Natural killer cell (primary cell): ENCODE measurements at regions of chr5 and their contacts with region 1.

Region 1: DNA sequence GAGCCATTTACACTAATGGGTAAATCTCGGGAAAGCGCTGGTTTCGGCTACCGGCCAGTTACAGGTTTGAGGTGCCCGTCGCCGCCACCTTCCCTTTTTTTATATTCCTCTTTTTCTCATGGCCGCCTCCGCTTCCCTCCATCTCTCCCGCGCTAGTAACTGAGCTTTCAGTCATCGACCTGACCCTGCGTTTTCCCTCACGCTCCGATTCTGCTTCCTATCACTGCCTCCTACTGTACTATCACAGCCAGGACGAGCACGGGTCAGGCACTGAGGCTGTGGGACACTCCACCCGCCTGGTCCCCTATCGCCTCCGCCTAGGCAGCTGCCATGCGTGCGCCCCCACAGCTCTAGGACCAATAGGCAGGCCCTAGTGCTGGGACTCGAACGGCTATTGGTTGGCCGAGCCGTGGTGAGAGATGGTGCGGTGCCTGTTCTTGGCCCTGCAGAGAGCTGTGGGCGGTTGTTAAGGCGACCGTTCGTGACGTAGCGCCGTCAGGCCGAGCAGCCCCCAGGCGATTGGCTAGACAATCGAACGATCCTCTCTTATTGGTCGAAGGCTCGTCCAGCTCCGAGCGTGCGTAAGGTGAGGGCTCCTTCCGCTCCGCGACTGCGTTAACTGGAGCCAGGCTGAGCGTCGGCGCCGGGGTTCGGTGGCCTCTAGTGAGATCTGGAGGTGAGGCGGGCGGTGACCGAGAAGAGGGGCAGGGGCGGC is at the start of gene HMGCR:
- DNase-seq: peak; percentile 95 to 99
- ATAC-seq: peak; percentile 90 to 98 (median 92)
- H3K4me3 ChIP-seq: peak within 1 kb of the TSS; percentile 77
- H3K4me3 Mint-ChIP-seq: no peak within 1 kb of the TSS
- H3K27ac ChIP-seq: peak within 1 kb of the TSS; percentile 82
- H3K27ac Mint-ChIP-seq: no peak within 1 kb of the TSS
- H3K4me1 ChIP-seq: peaks cover 10% of the 10 kb centered on the region
- H3K4me1 Mint-ChIP-seq: peaks cover 19 to 24% of the 10 kb centered on the region in 2 donors
- H3K27me3 ChIP-seq: no peaks in the 10 kb centered on the region
- H3K27me3 Mint-ChIP-seq: no peaks in the 10 kb centered on the region
- CTCF ChIP-seq: no peak
- total RNA-seq, gene HMGCR: 44.2 to 89.5 (median 62.6) TPM

Region 2: GRCh38 chr5:75236322-75237316 is 100.2 kb before region 1 on chr5 and contains the start of gene ANKRD31:
- intact Hi-C with region 1: loop called (anchors 1 kb)
- DNase-seq: peak; percentile 92 to 96
- ATAC-seq: peak; percentile 98 to 100 (median 100)
- H3K4me3 ChIP-seq: peak within 1 kb of the TSS; percentile 64
- H3K4me3 Mint-ChIP-seq: peak within 1 kb of the TSS; percentile 89
- H3K27ac ChIP-seq: peak within 1 kb of the TSS; percentile 69
- H3K27ac Mint-ChIP-seq: peak within 1 kb of the TSS; percentile 79 to 90
- H3K4me1 ChIP-seq: peaks cover 9% of the 10 kb centered on the region
- H3K4me1 Mint-ChIP-seq: peaks cover 0 to 5% of the 10 kb centered on the region in 2 donors
- H3K27me3 ChIP-seq: peaks cover 4% of the 10 kb centered on the region
- H3K27me3 Mint-ChIP-seq: peaks cover 0 to 4% of the 10 kb centered on the region in 2 donors
- CTCF ChIP-seq: peak; percentile 94
- total RNA-seq, gene ANKRD31: 0.09 to 0.15 (median 0.12) TPM

Region 3: DNA sequence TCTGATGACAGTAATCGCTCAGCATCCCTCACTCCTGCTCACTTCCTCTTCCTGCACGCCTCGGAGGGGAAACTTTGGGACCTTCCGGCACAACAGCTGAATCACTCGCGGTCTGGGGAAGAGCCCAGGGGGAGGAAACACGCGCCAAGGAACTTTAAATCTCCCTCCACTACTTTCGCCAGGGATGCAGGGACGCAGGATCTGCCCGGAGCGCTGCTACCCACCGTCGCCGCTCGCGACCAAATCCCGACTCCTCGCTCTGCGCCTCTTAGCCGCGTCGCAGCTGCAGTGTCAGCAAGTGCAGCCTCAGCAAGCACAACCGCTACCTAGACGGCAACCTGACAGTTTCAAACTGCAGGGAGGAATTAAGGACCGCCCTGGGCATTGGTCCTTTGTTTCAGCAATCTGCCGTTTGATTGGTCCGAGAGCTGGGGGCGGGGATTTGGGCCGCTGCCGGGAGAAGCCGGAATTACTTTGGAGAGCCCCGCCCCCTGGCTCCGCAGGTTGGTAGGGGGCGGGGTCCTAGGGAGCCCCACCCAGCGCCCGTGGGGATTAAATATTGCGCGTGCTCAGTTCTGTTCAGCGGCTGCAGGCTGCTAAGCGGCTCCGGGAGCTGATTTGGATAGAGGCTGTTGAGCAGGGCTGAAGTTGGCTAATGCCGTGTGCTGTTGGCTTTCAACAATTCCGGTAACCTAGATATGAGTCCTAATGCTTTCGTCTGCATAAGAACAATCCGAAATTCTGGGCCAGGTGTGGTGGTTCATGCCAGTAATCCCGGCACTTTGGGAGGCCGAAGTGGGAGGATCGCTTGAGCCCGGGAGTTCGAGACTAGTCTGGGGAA is 380.5 kb after region 1 on chr5 and contains the start of gene POC5:
- intact Hi-C with region 1: loop called (anchors 2 kb)
- DNase-seq: peak; percentile 97 to 98
- ATAC-seq: peak; percentile 94 to 97 (median 95)
- H3K4me3 ChIP-seq: peak within 1 kb of the TSS; percentile 75
- H3K4me3 Mint-ChIP-seq: peak within 1 kb of the TSS; percentile 97
- H3K27ac ChIP-seq: peak within 1 kb of the TSS; percentile 76
- H3K27ac Mint-ChIP-seq: peak within 1 kb of the TSS; percentile 92 to 97
- H3K4me1 ChIP-seq: peaks cover 11% of the 10 kb centered on the region
- H3K4me1 Mint-ChIP-seq: peaks cover 33 to 37% of the 10 kb centered on the region in 2 donors
- H3K27me3 ChIP-seq: no peaks in the 10 kb centered on the region
- H3K27me3 Mint-ChIP-seq: peaks cover 0 to 6% of the 10 kb centered on the region in 2 donors
- CTCF ChIP-seq: no peak
- total RNA-seq, gene POC5: 12.4 to 16.6 (median 12.5) TPM

Region 4: DNA sequence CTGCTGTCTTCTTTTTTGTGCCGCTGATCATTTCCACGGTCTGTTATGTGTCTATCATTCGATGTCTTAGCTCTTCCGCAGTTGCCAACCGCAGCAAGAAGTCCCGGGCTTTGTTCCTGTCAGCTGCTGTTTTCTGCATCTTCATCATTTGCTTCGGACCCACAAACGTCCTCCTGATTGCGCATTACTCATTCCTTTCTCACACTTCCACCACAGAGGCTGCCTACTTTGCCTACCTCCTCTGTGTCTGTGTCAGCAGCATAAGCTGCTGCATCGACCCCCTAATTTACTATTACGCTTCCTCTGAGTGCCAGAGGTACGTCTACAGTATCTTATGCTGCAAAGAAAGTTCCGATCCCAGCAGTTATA is 1396.3 kb after region 1 on chr5:
- intact Hi-C with region 1: loop called (anchors 10 kb)
- DNase-seq: peak; percentile 54 to 87
- ATAC-seq: peak; percentile 74 to 85 (median 83)
- H3K4me3 ChIP-seq: peak overlapping the region; percentile 9
- H3K4me3 Mint-ChIP-seq: peak overlapping the region; percentile 72
- H3K27ac ChIP-seq: peak overlapping the region; percentile 82
- H3K27ac Mint-ChIP-seq: peak overlapping the region; percentile 90 to 95
- H3K4me1 ChIP-seq: peaks cover 38% of the 10 kb centered on the region
- H3K4me1 Mint-ChIP-seq: peaks cover 62 to 63% of the 10 kb centered on the region in 2 donors
- H3K27me3 ChIP-seq: no peaks in the 10 kb centered on the region
- H3K27me3 Mint-ChIP-seq: no peaks in the 10 kb centered on the region
- CTCF ChIP-seq: no peak